Gastrocnemius medialis (tissue), 4 donors: ENCODE measurements at regions of chr19 and their contacts with region 1.

Region 1: DNA sequence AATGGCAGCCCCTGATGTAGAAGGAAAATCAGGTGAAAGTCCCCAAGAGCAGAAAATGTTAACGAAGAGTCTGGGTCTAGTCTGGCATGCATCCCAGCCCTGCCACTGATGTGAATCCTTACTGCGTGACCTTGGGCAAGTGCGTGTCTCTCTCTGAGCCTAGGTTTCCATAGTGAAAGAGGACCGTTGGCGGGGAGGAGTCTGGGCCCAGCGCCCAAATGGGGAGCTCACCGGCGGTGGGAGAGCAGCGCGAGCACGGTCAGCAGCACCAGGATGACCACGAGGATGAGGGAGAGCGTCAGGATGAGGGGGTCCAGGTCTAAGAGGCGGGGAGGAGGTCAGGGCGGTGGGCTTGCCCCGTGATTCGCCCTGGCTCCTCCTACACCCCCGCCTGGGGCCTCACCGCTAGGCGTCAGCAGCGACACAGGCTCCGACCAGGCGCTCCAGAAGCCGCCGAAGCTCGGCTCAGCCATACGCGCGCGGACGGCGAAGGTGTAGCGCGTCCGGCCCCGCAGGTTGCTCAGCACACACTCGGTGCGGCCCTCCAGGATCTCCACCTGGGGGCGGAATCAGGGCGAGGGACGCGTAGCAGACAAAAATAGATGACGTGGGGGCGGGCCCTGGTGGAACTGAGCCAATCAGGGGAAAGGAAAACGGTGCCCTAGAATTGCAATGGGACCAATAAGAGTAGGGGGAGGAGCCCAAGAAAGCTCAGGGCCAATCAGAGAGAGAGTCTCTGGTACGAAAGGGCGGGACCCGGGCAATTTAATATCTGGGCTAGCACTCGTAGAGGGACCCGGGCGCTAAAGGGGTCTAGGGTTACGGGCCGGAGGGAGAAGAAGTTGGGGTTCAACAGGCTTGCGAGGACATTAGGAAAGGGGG is 3.2 kb downstream of the EPOR start:
- DNase-seq: peak; percentile 93 to 97
- ATAC-seq: peak; percentile 99 to 100
- H3K4me3 ChIP-seq: peak overlapping the region; percentile 65 to 87 (median 77)
- H3K27ac ChIP-seq: peak overlapping the region; percentile 86 to 88 (median 88)
- H3K4me1 ChIP-seq: peaks cover 23 to 25% of the 10 kb centered on the region in 2 donors
- H3K27me3 ChIP-seq: peaks cover 24 to 30% (median 29%) of the 10 kb centered on the region in 3 donors
- CTCF ChIP-seq: peak; percentile 65 to 83 (median 74)
- POLR2A ChIP-seq: peak; percentile 82 to 89

Region 2: GRCh38 chr19:11214387-11214786 is 166.5 kb before region 1 on chr19:
- in situ Hi-C with region 1: no loop called
- intact Hi-C with region 1: no loop called
- DNase-seq: no peak
- ATAC-seq: no peak
- H3K4me3 ChIP-seq: no peak overlapping the region
- H3K27ac ChIP-seq: no peak overlapping the region
- H3K4me1 ChIP-seq: no peaks in the 10 kb centered on the region
- H3K27me3 ChIP-seq: no peaks in the 10 kb centered on the region
- CTCF ChIP-seq: no peak
- POLR2A ChIP-seq: no peak

Region 3: GRCh38 chr19:11410682-11411081 is 29.8 kb after region 1 on chr19:
- in situ Hi-C with region 1: no loop called
- intact Hi-C with region 1: no loop called
- DNase-seq: no peak
- ATAC-seq: no peak
- H3K4me3 ChIP-seq: no peak overlapping the region
- H3K27ac ChIP-seq: no peak overlapping the region
- H3K4me1 ChIP-seq: no peaks in the 10 kb centered on the region
- H3K27me3 ChIP-seq: peaks cover 0 to 18% (median 0%) of the 10 kb centered on the region in 3 donors
- CTCF ChIP-seq: no peak
- POLR2A ChIP-seq: no peak

Region 4: GRCh38 chr19:11482384-11483050 is 101.6 kb after region 1 on chr19:
- in situ Hi-C with region 1: no loop called
- intact Hi-C with region 1: loop called (anchors 2 kb)
- DNase-seq: peak; percentile 53 to 54
- ATAC-seq: peak; percentile 84 to 85
- H3K4me3 ChIP-seq: peak overlapping the region; percentile 23 to 51 (median 45)
- H3K27ac ChIP-seq: peak overlapping the region in 1 of 4 donors; percentile 2
- H3K4me1 ChIP-seq: peaks cover 6 to 12% of the 10 kb centered on the region in 2 donors
- H3K27me3 ChIP-seq: peaks cover 35 to 64% (median 43%) of the 10 kb centered on the region in 3 donors
- CTCF ChIP-seq: peak; percentile 72 to 96 (median 93)
- POLR2A ChIP-seq: no peak

Region 5: DNA sequence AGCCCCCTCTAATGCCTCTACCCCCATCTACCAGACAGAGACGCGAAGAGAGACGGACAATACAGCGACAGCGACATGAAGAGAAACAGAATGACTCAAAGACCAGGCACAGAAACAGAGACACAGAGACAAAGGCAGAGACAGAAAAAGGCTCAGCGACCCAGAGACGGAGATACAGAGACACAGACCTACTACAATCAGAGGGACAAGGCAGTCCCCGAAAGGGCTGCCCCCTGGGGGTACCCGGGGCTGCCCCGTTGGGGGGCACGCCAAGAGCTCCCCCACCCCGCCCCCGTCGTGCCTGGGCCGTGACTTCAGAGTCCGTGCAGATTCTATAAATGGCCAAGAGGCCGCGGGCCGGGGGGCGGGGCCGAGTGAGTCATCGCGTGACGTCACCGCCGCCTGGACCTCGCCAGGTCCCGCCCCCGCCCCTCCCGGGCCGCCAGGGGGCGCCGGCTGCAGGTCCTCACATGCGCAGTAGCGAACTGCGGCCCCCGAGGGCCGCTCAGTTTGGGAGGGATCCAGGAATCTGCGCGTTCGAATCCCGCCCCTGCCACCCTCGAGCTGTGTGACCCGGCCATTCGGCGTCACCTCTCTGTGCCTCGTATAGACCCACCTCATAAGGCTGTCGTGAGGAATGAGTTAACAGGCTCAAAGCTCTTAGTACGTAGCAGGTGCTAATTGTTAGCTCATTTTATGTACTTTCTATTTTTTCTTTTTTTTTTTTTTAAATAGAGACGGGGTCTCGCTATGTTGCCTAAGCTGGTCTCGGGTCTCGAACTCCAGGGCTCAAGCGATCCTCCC is 155.1 kb after region 1 on chr19:
- in situ Hi-C with region 1: no loop called
- intact Hi-C with region 1: loop called (anchors 5 kb)
- DNase-seq: peak; percentile 60 to 82
- ATAC-seq: peak; percentile 87 to 94
- H3K4me3 ChIP-seq: peak overlapping the region; percentile 45 to 60 (median 49)
- H3K27ac ChIP-seq: peak overlapping the region; percentile 74 to 84 (median 80)
- H3K4me1 ChIP-seq: peaks cover 0 to 3% of the 10 kb centered on the region in 2 donors
- H3K27me3 ChIP-seq: peaks cover 0 to 10% (median 7%) of the 10 kb centered on the region in 3 donors
- CTCF ChIP-seq: peak; percentile 75 to 91 (median 90)
- POLR2A ChIP-seq: peak; percentile 60 to 80

Region 6: DNA sequence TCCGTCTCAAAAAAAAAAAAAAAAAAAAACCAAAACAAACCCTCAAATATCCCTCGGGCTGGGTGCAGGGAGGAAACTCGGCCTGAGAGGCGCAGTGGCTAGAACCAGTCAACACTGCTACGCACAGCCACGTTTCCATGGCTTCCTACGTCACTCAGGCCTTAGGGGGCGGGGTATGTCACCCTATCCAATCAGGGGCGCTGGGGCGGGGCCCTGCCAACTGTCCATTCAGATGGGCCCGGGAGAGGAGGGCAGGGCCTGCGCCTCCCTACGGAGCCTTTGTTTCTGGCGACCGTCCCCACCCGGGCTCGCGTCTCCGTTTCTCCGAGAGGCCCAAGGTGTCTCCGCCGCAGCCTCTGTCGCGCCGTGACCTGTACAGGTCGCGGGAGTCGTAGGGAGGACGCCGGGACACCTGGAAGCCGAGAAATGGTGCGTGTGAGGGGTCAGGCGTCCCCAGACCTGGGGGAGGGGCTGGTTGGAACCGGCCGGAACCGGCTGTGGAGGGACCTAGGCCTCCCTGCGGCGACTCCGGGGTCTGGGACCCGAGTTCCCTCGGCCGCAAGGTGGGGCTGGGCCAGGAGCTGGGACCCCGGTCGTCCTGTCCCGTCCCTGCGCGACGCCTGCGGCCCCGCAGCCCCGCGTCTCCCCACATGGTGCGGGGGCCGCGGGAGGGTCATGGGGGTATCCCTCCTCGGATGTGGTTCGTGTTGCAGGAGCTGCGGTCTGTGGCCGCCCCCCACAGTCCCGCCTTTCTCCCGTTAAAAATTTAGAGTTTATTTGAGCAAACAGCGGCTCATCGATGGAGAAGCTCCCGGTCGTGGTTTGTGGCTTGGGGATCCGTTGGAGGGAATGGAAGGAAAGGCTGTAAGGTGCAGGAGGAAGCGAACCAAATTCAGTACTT is 216.6 kb after region 1 on chr19 and contains the start of gene ZNF627:
- in situ Hi-C with region 1: loop called in 1 of 4 experiments (anchors 25 kb)
- intact Hi-C with region 1: loop called (anchors 5 kb)
- DNase-seq: peak; percentile 97 to 99
- ATAC-seq: peak; percentile 99
- H3K4me3 ChIP-seq: peak within 1 kb of the TSS; percentile 88 to 99 (median 92)
- H3K27ac ChIP-seq: peak within 1 kb of the TSS; percentile 89 to 95 (median 91)
- H3K4me1 ChIP-seq: peaks cover 9% of the 10 kb centered on the region in 2 donors
- H3K27me3 ChIP-seq: no peaks in the 10 kb centered on the region
- CTCF ChIP-seq: peak in 4 of 5 experiments; percentile 12 to 43 (median 26)
- POLR2A ChIP-seq: peak; percentile 84 to 90
- total RNA-seq, gene ZNF627: 2.3 to 4.5 (median 3.7) TPM